H1 (cell line): ENCODE measurements at regions of chr14 and their contacts with region 1.

Region 1: DNA sequence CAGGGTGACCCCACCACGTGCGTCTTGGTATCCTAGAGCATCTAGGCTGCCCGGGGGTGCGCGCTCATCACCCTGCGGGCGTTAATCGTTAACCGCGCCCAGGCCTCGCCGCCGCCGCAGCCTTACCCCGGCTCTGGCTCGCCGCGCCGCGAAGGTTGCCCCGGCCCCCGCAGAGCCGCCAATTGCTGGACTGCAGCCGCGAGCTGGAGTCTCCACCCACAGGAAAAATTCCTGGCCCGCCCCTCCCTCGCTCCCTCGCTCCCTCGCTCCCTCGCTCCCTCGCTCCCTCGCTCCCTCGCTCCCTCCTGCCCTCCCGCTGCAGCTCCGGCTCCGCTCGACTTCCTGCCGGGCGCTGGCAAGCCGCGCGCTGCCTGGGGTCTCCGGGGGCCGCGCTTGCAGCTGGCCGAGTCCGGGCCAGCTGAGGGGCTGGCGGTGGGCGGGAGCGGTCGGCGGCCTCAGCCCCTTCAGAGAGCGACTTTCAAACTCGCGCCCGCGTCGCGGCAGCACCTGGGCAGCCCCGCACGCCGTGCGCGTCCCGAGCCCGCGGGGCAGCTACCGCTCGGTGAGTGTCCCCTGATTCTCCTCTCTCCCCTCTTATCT is at the start of gene PLEKHG3:
- DNase-seq: peak in 1 of 2 experiments; percentile 88
- H3K4me3 ChIP-seq: peak within 1 kb of the TSS; percentile 66 to 89 (median 79)
- H3K27ac ChIP-seq: peak within 1 kb of the TSS; percentile 48; the same call in 1 of the 2 replicates
- H3K4me1 ChIP-seq: peaks cover 30 to 56% (median 39%) of the 10 kb centered on the region in 4 experiments
- H3K27me3 ChIP-seq: no peaks in the 10 kb centered on the region
- CTCF ChIP-seq: no peak
- EP300 ChIP-seq: 0 out of 3 replicates have a peak, but pooled peaks of 1 of the 2 experiments have one; percentile 12
- POLR2A ChIP-seq: no peak
- RAD21 ChIP-seq: no peak; a peak in 1 of 4 replicates
- total RNA-seq, gene PLEKHG3: 89.1 and 90.6 TPM in 2 replicates

Region 2: GRCh38 chr14:64720131-64720576 is 15.9 kb after region 1 on chr14:
- CTCF ChIA-PET with region 1: interaction called, 74 read pairs
- POLR2A ChIA-PET with region 1: interaction called, 102 read pairs
- DNase-seq: no peak
- H3K4me3 ChIP-seq: no peak overlapping the region
- H3K27ac ChIP-seq: no peak overlapping the region
- H3K4me1 ChIP-seq: peaks cover 55 to 77% (median 63%) of the 10 kb centered on the region in 4 experiments
- H3K27me3 ChIP-seq: 0 out of 7 replicates have a peak, but pooled peaks cover 0 to 3% (median 0%) of the 10 kb centered on the region in 4 experiments
- CTCF ChIP-seq: no peak
- EP300 ChIP-seq: no peak
- POLR2A ChIP-seq: no peak
- RAD21 ChIP-seq: no peak

Region 3: GRCh38 chr14:64726585-64726890 is 22.3 kb after region 1 on chr14:
- CTCF ChIA-PET with region 1: interaction called, 20 read pairs
- POLR2A ChIA-PET with region 1: interaction called, 13 read pairs
- DNase-seq: no peak
- H3K4me3 ChIP-seq: peak overlapping the region in 1 of 4 experiments; percentile 7; a peak in 1 of 8 replicates
- H3K27ac ChIP-seq: no peak overlapping the region
- H3K4me1 ChIP-seq: peaks cover 24 to 44% (median 38%) of the 10 kb centered on the region in 4 experiments
- H3K27me3 ChIP-seq: no peaks in the 10 kb centered on the region
- CTCF ChIP-seq: no peak
- EP300 ChIP-seq: no peak
- POLR2A ChIP-seq: no peak
- RAD21 ChIP-seq: no peak

Region 4: GRCh38 chr14:64736271-64737122 is 32.3 kb after region 1 on chr14:
- CTCF ChIA-PET with region 1: interaction called, 16 read pairs
- POLR2A ChIA-PET with region 1: interaction called, 3 read pairs
- DNase-seq: peak in 1 of 2 experiments; percentile 62
- H3K4me3 ChIP-seq: no peak overlapping the region
- H3K27ac ChIP-seq: no peak overlapping the region
- H3K4me1 ChIP-seq: peaks cover 0 to 13% (median 6%) of the 10 kb centered on the region in 4 experiments; a peak in 6 of 7 replicates
- H3K27me3 ChIP-seq: no peaks in the 10 kb centered on the region
- CTCF ChIP-seq: peak; percentile 59 to 66 (median 63)
- EP300 ChIP-seq: no peak
- POLR2A ChIP-seq: no peak
- RAD21 ChIP-seq: peak; percentile 38 to 60; a peak in 3 of 4 replicates